ENCODE measurements at regions of chr1 and their contacts with region 1.

Region 1: DNA sequence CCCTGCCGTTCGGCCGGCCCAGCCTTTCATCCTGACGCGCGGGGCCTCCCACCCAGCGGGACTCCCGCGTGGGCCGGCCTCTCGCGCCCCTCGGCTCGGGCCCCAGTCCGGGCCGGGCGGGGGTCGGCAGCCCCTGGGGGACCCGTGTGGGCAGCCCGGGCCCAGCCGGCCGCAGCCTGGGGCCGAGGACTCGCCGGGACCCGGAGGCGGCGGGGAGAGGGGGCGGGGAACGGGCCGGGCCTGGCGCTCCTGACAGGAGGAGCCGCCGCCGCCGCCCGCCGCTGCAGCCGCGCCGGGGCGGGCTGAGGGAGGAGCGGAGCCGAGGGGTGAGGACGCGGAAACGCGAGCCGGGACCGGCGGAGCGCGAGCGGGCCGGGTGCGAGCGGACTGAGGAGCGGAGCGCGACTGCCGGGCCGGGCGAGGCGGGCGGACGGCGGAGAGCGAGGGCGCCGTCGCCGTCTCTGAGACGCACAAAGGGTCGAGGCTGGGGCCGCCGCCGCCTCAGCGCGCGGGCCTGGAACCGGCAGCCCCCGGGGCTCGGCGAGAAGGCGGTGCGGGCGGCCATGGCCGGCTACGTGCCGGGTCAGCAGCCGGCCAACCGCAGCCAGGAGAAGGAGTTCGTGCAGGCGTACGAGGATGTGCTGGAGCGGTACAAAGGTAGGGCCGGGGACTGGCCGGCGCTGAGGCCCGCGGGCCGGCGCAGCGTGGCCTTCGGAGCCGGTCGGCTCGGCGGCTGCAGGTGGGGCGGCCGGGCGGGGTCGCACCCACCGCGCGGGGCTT is 79.1 kb downstream of the NDUFS5 start:
- DNase-seq: peak; percentile 81

Region 2: GRCh38 chr1:38891753-38892152 is 213.5 kb before region 1 on chr1:
- intact Hi-C with region 1: no loop called
- DNase-seq: no peak

Region 3: DNA sequence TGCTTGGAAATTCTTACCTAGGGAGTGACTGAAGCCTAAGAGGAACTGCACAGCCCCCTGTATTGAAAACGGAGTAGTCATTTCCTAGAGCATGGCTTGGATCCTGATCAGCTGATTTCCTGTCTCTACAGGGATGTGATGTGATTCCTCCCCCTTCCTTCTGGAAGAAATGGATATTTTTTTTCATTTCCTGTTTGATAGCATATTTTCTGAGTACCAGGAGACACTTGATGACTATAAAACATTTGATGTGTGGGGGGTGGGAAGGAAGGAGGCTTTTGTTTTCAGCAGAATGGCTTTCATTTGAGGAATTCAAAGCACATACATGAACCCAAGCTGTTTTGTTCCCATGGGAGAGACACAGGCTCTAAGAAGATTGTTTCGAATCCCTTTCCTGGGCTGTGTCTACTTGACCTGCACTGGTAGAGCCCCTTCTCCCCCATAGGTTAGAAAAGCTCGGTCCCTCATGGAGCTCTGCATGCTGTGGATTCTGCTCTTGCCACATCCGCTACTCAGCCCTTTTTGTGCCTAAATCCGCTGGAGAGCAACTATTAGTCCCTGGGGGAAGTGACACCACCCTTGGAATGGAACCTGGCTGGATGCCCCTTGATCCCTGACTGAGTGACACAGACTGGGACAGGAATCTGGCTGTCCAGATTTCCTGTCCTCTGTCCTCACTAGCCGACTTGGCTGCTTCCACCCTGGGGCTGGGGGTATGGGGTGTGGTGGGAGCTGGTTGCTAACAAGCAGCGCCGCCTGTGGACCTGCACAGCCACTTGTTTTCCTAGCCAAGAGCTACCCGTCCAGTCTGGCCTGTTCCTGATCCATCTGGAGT is 27.5 kb after region 1 on chr1:
- intact Hi-C with region 1: loop called (anchors 1 kb)
- DNase-seq: peak; percentile 83

Region 4: GRCh38 chr1:39154553-39155421 is 49.5 kb after region 1 on chr1:
- intact Hi-C with region 1: no loop called
- DNase-seq: no peak

Region 5: GRCh38 chr1:39196244-39197215 is 91.3 kb after region 1 on chr1:
- intact Hi-C with region 1: loop called (anchors 1 kb)
- DNase-seq: no peak

Region 6: DNA sequence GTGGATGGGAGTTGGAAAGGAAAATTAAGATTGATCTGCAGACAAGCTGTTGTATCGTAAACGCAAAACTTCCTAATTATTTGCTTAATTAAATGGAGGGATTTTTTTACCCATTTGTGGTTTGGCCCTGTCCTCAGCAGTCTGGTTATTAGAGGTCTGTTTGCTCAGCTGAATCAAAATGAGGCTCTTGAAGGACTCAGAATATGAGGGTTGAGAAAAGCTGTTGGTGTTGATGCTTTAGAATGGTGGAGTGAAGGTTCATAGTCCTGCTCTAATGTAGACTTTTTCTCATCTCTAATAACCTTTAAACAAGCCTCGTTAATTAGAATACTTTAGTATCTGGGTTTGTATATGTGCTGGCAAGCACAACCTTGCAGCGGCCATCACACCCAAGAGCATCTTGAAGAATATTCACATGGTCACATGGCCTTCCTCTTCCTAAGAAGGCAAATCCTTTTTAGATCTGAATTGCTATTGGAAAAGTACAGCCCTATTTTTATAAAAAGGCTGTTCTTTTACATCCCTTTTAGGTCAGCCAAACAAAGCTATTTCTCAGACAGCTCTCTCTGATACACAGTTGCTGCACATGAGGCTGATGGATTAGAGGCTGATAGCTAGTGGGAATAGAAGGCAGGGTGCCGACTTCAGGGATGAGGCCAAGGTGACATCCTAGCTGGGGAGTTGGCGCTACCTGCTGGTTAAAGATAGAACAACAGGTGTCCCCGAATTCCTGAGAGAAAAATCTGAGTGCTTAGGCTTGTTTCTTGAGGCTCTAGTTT is 153.1 kb after region 1 on chr1:
- intact Hi-C with region 1: loop called (anchors 2 kb)
- DNase-seq: no peak

Region 7: DNA sequence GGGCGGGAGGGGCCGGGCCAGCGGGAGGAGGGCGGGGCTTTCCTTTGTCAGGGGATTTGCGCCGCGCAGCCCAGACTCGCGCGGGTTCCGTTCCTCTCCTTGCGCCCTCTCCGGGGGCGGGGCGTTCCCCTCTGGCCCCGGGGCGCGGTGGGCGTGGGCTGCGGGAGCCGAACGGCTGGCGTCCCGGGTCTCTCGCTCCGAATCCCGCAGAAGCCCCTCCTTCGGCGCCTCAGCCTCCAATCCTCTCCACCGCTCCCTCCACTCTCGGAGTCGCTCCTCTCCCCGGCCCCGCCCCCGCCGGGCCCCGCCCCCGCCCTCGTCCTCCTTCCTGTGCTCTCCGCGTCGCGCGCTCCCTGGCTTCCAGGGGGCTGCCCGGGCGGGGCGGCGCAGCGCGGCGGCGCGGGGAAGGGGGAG is 303.4 kb after region 1 on chr1:
- intact Hi-C with region 1: loop called (anchors 5 kb)
- DNase-seq: peak; percentile 97

Region 8: GRCh38 chr1:39733161-39733560 is 627.9 kb after region 1 on chr1:
- intact Hi-C with region 1: no loop called
- DNase-seq: no peak